ENCODE measurements at regions of chr12 and their contacts with region 1.

Region 1: GRCh38 chr12:18139989-18140596 is 50.1 kb upstream of the RERGL start:
- DNase-seq: peak; percentile 60
- ATAC-seq: no peak
- H3K4me3 ChIP-seq: no peak overlapping the region
- H3K27ac ChIP-seq: no peak overlapping the region
- H3K4me1 ChIP-seq: peaks cover 21% of the 10 kb centered on the region
- H3K27me3 ChIP-seq: no peaks in the 10 kb centered on the region
- CTCF ChIP-seq: peak; percentile 68

Region 2: DNA sequence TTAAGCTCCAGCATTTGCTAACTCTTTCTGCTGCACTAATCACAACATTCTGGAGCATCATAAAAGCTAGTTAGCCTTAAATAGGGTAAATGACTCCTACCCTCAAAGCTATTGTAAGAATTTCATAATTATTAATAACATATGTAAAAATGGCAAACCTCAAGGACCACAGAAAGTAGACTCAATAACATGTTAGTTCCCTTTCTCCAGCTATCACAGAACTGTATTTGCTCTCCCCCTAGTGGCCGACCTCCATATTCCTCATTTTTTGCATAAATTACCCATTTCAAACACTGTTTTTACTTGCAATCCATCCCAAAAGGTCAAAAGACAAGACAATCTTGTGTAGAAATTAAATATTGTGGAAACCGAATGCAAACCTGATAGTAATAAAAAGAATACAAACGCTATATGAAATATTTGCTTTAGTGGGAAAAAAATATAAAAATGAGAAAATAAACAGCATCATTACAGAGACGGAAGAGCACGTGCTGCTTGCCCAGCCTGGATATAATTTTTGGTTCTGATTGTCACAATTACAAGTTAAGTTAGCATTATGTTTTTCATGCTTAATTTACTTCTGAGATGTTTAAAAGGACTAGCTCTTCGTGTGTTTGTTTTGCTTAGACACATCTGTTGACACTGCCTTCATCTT is 148.0 kb before region 1 on chr12:
- CTCF ChIA-PET with region 1: no interaction called
- POLR2A ChIA-PET with region 1: no interaction called
- intact Hi-C with region 1: no loop called
- DNase-seq: peak; percentile 53
- ATAC-seq: 0 out of 2 replicates have a peak, but pooled peaks have one; percentile 27
- H3K4me3 ChIP-seq: no peak overlapping the region
- H3K27ac ChIP-seq: no peak overlapping the region
- H3K4me1 ChIP-seq: no peaks in the 10 kb centered on the region
- H3K27me3 ChIP-seq: no peaks in the 10 kb centered on the region
- CTCF ChIP-seq: peak; percentile 75

Region 3: DNA sequence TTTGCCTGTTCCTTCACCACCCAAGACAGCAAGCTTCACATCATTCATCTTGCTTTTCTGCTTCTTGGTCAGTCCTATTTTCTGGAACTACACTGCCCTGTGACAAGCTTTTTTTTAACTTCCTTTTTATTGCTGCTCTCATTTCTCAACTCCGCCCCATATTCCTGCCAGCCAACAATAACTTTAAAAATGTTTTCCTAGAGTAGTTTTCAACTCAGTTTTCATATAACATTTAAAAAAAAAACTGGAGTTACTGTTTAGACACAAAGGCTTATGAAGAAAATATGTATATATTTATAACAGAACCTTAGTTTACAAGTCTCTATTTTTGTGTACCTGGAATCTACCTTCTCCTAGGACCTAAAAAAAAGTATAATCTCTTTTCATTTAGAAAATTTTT is 50.0 kb before region 1 on chr12 and contains the start of gene RERGL:
- CTCF ChIA-PET with region 1: no interaction called
- POLR2A ChIA-PET with region 1: no interaction called
- intact Hi-C with region 1: no loop called
- DNase-seq: no peak
- ATAC-seq: no peak
- H3K4me3 ChIP-seq: no peak within 1 kb of the TSS
- H3K27ac ChIP-seq: no peak within 1 kb of the TSS
- H3K4me1 ChIP-seq: no peaks in the 10 kb centered on the region
- H3K27me3 ChIP-seq: no peaks in the 10 kb centered on the region
- CTCF ChIP-seq: no peak
- total RNA-seq, gene RERGL: not detected in 2 replicates

Region 4: GRCh38 chr12:18101043-18101442 is 39.0 kb before region 1 on chr12:
- CTCF ChIA-PET with region 1: no interaction called
- POLR2A ChIA-PET with region 1: no interaction called
- intact Hi-C with region 1: no loop called
- DNase-seq: no peak
- ATAC-seq: no peak
- H3K4me3 ChIP-seq: no peak overlapping the region
- H3K27ac ChIP-seq: no peak overlapping the region
- H3K4me1 ChIP-seq: no peaks in the 10 kb centered on the region
- H3K27me3 ChIP-seq: no peaks in the 10 kb centered on the region
- CTCF ChIP-seq: no peak

Region 5: DNA sequence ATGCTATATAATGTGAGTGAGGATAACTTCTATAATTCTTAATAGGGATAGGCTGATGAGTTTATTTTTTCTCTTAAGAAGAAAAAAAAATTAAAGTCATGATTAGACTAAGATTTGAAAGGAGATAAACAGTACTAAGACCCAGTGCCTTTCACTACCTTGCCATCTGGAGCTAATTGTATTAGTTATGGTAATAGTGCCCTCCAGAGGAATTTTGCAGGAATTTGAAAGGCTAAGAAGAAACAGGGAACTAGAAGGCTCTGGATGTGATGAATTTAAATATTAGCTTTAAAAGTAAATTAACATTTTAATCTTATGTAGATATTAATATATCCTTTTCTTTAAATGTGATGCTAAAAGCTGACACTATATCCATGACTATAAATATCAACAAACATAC is 84.7 kb after region 1 on chr12:
- CTCF ChIA-PET with region 1: no interaction called
- POLR2A ChIA-PET with region 1: no interaction called
- intact Hi-C with region 1: loop called (anchors 1 kb)
- DNase-seq: peak; percentile 57
- ATAC-seq: peak; percentile 74
- H3K4me3 ChIP-seq: no peak overlapping the region
- H3K27ac ChIP-seq: no peak overlapping the region
- H3K4me1 ChIP-seq: no peaks in the 10 kb centered on the region
- H3K27me3 ChIP-seq: no peaks in the 10 kb centered on the region
- CTCF ChIP-seq: peak; percentile 59

Region 6: DNA sequence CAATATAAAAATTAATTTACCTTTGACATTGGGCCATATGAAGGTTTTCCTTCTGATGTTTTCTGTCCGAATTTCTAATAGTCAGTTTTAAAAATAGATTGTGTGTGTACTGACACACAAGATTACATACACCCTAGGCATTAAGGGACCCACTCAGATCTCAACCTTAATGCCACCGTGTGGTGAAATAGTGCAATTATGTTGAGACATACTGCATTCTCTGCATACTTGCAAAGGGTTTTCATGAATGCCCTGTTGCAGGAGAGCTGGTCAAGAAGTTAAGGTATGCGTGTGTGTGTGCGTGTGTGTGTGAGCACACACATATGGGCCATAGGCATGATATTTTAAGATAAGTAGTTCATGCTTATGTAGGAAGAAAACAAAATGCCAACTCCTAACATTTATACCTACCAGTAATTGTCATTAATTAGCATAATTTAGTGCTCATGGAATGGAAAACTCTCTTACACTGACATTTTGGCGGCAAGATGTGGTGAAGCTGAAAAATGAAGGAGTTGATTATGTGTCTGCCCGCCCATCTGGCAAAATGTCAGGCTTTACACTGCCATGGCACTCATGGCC is 180.0 kb after region 1 on chr12:
- CTCF ChIA-PET with region 1: no interaction called
- POLR2A ChIA-PET with region 1: no interaction called
- intact Hi-C with region 1: loop called (anchors 2 kb)
- DNase-seq: peak; percentile 79
- ATAC-seq: peak; percentile 92
- H3K4me3 ChIP-seq: no peak overlapping the region
- H3K27ac ChIP-seq: no peak overlapping the region
- H3K4me1 ChIP-seq: 0 out of 2 replicates have a peak, but pooled peaks cover 9% of the 10 kb centered on the region
- H3K27me3 ChIP-seq: no peaks in the 10 kb centered on the region
- CTCF ChIP-seq: peak; percentile 71

Measured in PC-3 (cell line).